Activated CD4-positive, alpha-beta memory T cell treated with anti-CD3 and anti-CD28 coated beads for 36 hours (primary cell): ENCODE measurements at regions of chr16 and their contacts with region 1.

Region 1: DNA sequence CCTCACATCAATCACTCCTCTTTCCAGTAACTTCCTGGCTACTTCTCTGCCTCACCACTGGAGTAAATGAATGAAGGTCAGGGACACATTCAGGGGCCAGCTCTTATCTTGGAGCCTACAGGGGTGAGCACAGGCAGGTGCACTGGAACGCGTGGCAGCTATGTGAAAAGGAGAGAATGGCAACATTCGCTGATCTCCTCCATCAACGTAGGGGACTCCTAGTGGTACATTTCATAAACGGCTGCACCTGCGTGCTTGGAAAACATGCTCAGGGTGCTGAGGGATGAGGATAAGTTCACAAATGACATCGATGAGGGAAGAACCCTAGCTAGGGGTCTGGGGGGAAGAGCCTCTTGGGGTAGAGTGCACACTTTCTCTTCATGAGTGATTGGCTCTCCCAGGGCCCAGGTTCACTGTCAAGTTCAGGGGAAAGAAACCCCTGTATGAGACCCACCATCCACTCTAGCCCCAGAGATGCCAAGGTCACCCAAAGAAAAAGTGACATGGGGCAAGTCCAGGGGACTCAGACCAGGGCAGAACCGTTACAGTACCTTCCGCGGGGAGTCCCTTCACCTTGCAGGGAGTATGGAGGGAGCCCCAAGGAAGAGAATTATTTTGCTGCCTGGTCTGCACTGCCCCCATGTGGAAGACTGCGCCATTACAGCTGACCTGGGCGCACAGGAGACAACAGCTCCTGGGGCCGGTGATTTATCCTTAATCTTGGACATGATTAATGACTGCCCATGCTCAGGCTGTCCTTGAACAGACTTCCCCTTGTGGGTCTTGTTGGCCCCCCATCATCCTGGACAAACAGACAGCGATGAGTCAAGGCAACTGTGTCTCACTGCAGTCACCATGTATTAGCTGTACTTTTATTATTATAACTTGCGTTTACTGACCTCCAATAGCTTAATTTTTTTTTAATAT is 30.1 kb downstream of the VAC14 start:
- DNase-seq: peak; percentile 75
- H3K4me3 Mint-ChIP-seq: no peak overlapping the region
- H3K27ac Mint-ChIP-seq: no peak overlapping the region
- H3K4me1 Mint-ChIP-seq: no peaks in the 10 kb centered on the region
- H3K27me3 Mint-ChIP-seq: no peaks in the 10 kb centered on the region

Region 2: DNA sequence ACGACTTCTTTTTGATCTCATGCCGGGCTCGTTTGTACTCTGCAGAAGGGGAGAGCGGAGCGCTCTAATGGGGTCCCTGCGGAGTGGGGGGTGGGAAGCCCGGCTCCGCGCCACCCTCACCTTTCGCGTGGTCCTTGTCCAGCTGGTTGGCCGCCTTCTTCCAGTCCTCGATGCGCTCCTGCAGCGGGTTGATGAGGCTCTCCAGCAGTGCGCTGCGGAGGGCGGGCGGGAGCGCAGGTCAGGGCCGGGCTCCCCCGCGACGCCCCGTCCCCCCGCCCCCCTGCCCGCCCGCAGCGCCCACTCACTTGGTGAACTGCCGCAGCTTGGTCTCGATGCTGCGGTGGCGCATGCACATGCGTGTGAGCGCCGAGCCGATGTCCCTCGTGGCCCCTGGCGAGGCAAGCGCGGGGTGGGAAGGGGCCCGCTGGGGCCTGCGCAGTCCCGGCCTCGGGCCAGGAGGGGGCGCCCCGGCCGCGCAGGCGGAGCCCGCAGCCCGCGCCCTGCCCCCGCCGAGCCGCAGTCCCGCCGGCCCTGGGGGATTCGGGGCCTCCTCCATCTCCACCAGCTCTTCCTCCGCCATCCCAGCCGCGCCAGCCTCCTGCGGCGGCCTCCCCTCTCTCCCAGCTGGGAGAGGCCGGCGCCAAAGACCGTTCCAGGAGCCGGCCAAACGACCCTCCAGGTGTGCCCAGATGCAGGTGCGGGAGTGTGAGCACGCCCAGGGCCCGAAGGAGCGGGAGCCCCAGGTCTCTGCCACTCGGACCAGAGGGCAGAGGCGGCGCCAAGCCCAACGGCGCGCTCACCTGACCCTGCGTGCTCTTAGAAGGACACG is 91.0 kb before region 1 on chr16:
- CTCF ChIA-PET with region 1: interaction called, 49 read pairs
- POLR2A ChIA-PET with region 1: no interaction called
- intact Hi-C with region 1: loop called (anchors 1 kb)
- DNase-seq: no peak
- H3K4me3 Mint-ChIP-seq: no peak overlapping the region
- H3K27ac Mint-ChIP-seq: no peak overlapping the region
- H3K4me1 Mint-ChIP-seq: no peaks in the 10 kb centered on the region
- H3K27me3 Mint-ChIP-seq: peaks cover 12% of the 10 kb centered on the region

Region 3: DNA sequence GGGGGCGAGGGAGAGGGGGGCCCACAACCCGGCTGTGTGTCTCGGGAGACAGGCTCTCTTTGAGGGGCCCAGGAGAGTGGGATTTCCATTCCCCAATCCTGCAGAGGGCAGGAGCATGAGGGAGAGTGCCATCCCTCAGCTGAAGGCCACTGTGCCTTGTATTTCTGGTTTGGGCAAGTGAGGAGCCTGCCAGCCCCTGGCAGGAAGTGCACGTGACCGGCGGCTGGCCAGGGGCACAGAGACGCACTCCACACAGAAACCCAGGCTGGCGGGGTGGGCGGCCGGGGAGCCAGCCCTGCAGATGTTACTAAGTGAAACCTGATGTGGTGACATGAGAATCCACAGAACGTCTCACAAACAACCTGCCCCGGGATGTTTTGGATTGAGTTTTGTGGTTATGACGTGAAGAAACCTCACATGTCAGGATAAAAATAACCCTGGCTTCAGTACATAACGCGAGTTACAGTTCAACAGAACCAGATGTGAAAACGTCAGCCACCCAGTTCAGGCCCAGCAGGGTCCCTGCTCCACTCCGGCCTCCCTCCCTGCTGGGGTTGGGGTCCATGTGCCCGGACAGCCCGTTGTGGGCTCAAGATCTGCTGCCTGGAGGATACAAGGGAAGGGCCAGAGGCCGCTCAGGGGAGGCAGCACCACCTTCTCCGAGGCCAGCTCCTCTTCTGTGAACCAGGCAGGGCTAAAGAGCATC is 33.4 kb before region 1 on chr16:
- CTCF ChIA-PET with region 1: interaction called, 8 read pairs
- POLR2A ChIA-PET with region 1: interaction called, 3 read pairs
- intact Hi-C with region 1: loop called (anchors 1 kb)
- DNase-seq: peak; percentile 90
- H3K4me3 Mint-ChIP-seq: peak overlapping the region; percentile 40
- H3K27ac Mint-ChIP-seq: peak overlapping the region; percentile 92
- H3K4me1 Mint-ChIP-seq: peaks cover 50% of the 10 kb centered on the region
- H3K27me3 Mint-ChIP-seq: no peaks in the 10 kb centered on the region

Region 4: DNA sequence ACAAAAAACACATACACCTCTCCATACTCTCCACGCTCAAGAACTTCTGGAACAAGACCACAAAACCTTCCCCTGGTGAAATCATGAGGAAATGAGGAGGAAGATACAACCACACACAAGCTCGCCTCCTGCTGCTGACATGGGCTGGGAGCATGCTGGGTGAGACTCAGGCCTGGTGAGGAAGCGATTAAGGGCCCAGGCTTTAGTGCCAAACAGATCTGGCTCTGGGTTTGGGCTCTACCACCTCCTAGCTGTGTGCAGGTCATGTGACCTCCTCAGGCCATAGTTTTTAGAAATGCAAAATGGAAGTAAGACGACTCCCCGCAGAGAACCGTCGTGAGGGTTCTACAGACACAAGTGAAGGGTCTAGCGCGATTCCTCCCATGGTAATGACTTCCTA is 11.2 kb before region 1 on chr16:
- CTCF ChIA-PET with region 1: interaction called, 35 read pairs
- POLR2A ChIA-PET with region 1: no interaction called
- intact Hi-C with region 1: no loop called
- DNase-seq: no peak
- H3K4me3 Mint-ChIP-seq: no peak overlapping the region
- H3K27ac Mint-ChIP-seq: no peak overlapping the region
- H3K4me1 Mint-ChIP-seq: peaks cover 4% of the 10 kb centered on the region
- H3K27me3 Mint-ChIP-seq: no peaks in the 10 kb centered on the region